ENCODE measurements at regions of chr15 and their contacts with region 1.

Region 1: GRCh38 chr15:79596051-79596507 is 163.9 kb downstream of the MINAR1 start:
- DNase-seq: peak; percentile 71
- ATAC-seq: peak; percentile 100
- H3K4me3 ChIP-seq: no peak overlapping the region
- H3K27ac ChIP-seq: no peak overlapping the region
- H3K4me1 ChIP-seq: no peaks in the 10 kb centered on the region
- H3K27me3 ChIP-seq: no peaks in the 10 kb centered on the region
- CTCF ChIP-seq: peak; percentile 97 to 100 (median 99); a peak in 5 of 6 replicates
- EP300 ChIP-seq: no peak
- POLR2A ChIP-seq: no peak
- RAD21 ChIP-seq: peak; percentile 89

Region 2: DNA sequence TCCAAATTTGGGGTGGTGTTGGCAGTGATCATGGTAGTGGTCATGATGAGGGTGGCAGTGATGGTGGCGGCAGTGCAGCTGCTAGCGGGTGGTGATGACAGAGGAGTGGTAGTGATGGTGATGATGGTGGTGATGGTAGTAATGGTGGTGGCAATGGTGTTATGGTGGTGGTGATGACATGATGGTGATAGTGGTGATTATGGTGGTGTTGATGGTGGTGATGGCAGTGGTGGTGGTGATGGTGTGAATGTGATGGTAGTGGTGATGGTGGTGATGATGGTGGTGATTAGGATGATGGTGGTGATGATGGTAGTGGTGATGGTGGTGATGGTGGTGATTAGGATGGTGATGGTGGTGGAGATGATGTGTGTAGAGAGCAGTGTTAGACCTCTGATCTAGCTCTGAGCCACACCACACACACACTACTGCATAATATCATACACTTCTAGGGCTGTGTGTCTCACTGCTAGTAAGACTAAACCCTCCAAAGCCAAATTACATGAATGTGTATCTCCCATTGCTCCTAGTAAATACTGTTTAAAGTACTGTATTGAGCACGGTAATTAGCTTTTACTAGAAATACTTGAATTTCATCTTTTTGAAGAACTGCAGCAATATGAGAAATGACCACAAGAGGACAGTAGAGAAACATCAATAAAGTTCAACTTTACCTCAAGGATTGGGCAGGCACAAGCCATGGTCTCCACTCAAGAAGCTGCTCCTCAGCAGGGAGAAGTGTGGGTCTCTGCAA is 256.3 kb before region 1 on chr15:
- CTCF ChIA-PET with region 1: interaction called, 57 read pairs
- POLR2A ChIA-PET with region 1: no interaction called
- RAD21 ChIA-PET with region 1: interaction called, 13 read pairs
- SMC1A ChIA-PET with region 1: interaction called, 10 read pairs
- in situ Hi-C with region 1: no loop called
- intact Hi-C with region 1: no loop called
- DNase-seq: no peak
- ATAC-seq: peak; percentile 71
- H3K4me3 ChIP-seq: no peak overlapping the region
- H3K27ac ChIP-seq: no peak overlapping the region
- H3K4me1 ChIP-seq: no peaks in the 10 kb centered on the region
- H3K27me3 ChIP-seq: no peaks in the 10 kb centered on the region
- CTCF ChIP-seq: peak; percentile 78 to 91 (median 83)
- EP300 ChIP-seq: no peak
- POLR2A ChIP-seq: no peak
- RAD21 ChIP-seq: peak; percentile 71

Region 3: DNA sequence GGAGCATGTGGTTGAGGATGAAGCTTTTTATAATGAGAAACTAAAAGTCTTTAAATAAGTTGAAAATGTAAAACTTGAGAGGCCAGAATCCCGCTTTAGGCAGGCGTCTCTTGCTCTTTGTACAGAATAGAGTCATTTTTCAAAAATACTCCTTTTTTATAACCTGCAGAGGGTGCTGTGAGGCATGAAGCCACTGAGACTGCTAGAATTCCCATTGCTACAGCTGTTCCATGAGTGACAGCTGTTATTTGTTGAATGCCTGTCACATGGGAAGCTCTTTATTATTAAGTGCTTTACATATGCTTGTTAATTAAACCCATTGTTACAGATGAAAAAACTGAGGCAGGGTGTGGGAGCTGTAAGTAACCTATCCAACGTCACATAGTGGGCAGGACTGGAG is 145.4 kb before region 1 on chr15:
- CTCF ChIA-PET with region 1: interaction called, 6 read pairs
- POLR2A ChIA-PET with region 1: no interaction called
- RAD21 ChIA-PET with region 1: no interaction called
- SMC1A ChIA-PET with region 1: interaction called, 3 read pairs
- in situ Hi-C with region 1: no loop called
- intact Hi-C with region 1: loop called (anchors 5 kb)
- DNase-seq: no peak
- ATAC-seq: no peak
- H3K4me3 ChIP-seq: no peak overlapping the region
- H3K27ac ChIP-seq: no peak overlapping the region
- H3K4me1 ChIP-seq: no peaks in the 10 kb centered on the region
- H3K27me3 ChIP-seq: peaks cover 0 to 5% of the 10 kb centered on the region in 2 experiments; a peak in 1 of 4 replicates
- CTCF ChIP-seq: no peak; a peak in 1 of 6 replicates
- EP300 ChIP-seq: no peak
- POLR2A ChIP-seq: no peak
- RAD21 ChIP-seq: no peak

Region 4: DNA sequence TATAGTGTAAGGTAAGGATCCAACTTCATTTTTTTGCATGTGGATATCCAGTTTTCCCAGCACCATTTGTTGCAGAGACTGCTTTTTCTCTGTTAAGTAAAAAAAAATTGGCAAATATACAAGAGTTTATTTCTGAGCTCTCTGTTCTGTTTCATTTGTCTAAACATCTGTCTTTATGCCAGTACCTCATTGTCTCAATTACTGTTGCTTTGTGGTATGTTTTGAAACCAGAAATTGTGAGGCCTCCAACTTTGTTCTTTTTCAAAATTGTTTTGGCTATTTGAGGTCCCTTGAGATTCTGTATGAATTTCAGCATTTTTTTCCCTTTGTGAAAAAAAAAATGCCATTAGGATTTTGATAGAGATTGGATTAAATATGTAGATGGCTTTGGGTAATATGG is 13.4 kb before region 1 on chr15:
- CTCF ChIA-PET with region 1: interaction called, 32 read pairs
- POLR2A ChIA-PET with region 1: no interaction called
- RAD21 ChIA-PET with region 1: interaction called, 4 read pairs
- SMC1A ChIA-PET with region 1: interaction called, 5 read pairs
- in situ Hi-C with region 1: no loop called
- intact Hi-C with region 1: no loop called
- DNase-seq: no peak
- ATAC-seq: no peak
- H3K4me3 ChIP-seq: no peak overlapping the region
- H3K27ac ChIP-seq: no peak overlapping the region
- H3K4me1 ChIP-seq: no peaks in the 10 kb centered on the region
- H3K27me3 ChIP-seq: no peaks in the 10 kb centered on the region
- CTCF ChIP-seq: no peak
- EP300 ChIP-seq: no peak
- POLR2A ChIP-seq: no peak
- RAD21 ChIP-seq: no peak

Region 5: GRCh38 chr15:79606831-79607355 is 10.8 kb after region 1 on chr15:
- CTCF ChIA-PET with region 1: interaction called, 18 read pairs
- POLR2A ChIA-PET with region 1: no interaction called
- RAD21 ChIA-PET with region 1: no interaction called
- SMC1A ChIA-PET with region 1: interaction called, 5 read pairs
- in situ Hi-C with region 1: no loop called
- intact Hi-C with region 1: no loop called
- DNase-seq: no peak
- ATAC-seq: no peak
- H3K4me3 ChIP-seq: no peak overlapping the region
- H3K27ac ChIP-seq: no peak overlapping the region
- H3K4me1 ChIP-seq: no peaks in the 10 kb centered on the region
- H3K27me3 ChIP-seq: no peaks in the 10 kb centered on the region; a peak in 3 of 4 replicates
- CTCF ChIP-seq: no peak
- EP300 ChIP-seq: no peak
- POLR2A ChIP-seq: no peak
- RAD21 ChIP-seq: no peak

Region 6: DNA sequence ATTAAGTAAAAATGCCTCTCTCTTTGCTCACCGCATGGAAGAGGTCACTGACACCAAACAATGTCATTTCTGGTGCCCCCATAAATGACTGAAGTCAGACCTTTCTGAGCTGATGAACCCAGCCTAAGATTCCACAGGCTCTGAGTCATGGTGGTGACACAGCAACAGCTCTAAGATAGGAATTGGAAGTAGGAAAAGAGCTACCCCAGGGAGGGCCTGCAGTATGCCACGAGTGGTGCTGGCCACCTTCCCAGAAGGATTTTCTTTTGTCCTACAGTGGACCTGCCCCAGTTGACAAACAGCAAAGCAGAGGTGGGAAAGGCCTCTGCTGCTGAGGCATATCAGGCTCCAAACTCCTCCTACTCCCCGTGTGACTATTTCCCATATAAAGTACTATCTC is 44.1 kb after region 1 on chr15:
- CTCF ChIA-PET with region 1: interaction called, 10 read pairs
- POLR2A ChIA-PET with region 1: no interaction called
- RAD21 ChIA-PET with region 1: no interaction called
- SMC1A ChIA-PET with region 1: no interaction called
- in situ Hi-C with region 1: no loop called
- intact Hi-C with region 1: no loop called
- DNase-seq: no peak
- ATAC-seq: no peak
- H3K4me3 ChIP-seq: no peak overlapping the region
- H3K27ac ChIP-seq: no peak overlapping the region
- H3K4me1 ChIP-seq: no peaks in the 10 kb centered on the region
- H3K27me3 ChIP-seq: no peaks in the 10 kb centered on the region; a peak in 1 of 4 replicates
- CTCF ChIP-seq: no peak
- EP300 ChIP-seq: no peak
- POLR2A ChIP-seq: no peak
- RAD21 ChIP-seq: no peak